Right cardiac atrium (tissue), 5 donors: ENCODE measurements at regions of chr2 and their contacts with region 1.

Region 1: GRCh38 chr2:237691908-237692600 is 64.7 kb downstream of the LRRFIP1 start:
- DNase-seq: peak; percentile 98 to 99 (median 99)
- ATAC-seq: peak; percentile 80 to 85
- H3K4me3 ChIP-seq: peak overlapping the region; percentile 82
- H3K27ac ChIP-seq: peak overlapping the region; percentile 90
- H3K4me1 ChIP-seq: peaks cover 15% of the 10 kb centered on the region
- H3K27me3 ChIP-seq: no peaks in the 10 kb centered on the region

Region 2: DNA sequence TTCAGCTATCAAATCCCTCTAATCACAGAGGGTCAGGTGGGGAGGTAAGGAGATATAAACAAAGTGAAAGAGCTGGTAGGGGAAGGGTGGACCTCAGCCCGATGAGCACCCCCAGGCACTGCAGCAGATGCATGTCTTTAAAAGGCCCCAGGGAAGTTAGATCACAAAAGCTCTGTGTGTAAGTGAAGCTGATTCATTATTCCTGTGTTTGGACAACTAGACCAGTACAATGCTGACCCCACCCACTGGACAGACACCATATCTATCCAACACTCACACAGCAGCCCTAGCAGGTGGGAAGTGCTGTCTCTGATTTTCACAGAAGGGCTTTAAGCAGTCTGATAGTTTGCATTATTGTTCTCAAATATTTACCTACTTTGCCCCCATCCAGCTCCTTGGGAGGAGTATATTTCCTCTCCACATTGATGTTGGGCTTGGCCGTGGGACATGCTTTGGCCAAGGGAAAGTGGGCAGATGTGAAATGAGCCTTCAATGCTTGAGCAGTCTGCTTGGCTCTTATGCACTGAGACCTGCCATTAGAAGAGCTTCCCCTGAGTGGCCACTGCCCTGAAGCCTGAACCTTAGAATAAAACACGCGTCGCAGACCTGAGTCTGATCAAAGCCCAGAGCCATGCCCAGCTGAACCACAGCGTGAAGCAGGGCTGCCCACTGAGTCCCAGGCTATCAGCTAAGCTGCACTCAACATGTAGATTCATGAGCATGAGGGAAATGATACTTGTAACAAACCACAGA is 495.0 kb before region 1 on chr2:
- intact Hi-C with region 1: no loop called
- DNase-seq: no peak
- ATAC-seq: peak in 1 of 2 donors; percentile 77
- H3K4me3 ChIP-seq: no peak overlapping the region
- H3K27ac ChIP-seq: no peak overlapping the region
- H3K4me1 ChIP-seq: peaks cover 2% of the 10 kb centered on the region
- H3K27me3 ChIP-seq: no peaks in the 10 kb centered on the region

Region 3: GRCh38 chr2:237529452-237530402 is 162.3 kb before region 1 on chr2:
- intact Hi-C with region 1: no loop called
- DNase-seq: no peak
- ATAC-seq: peak in 1 of 2 donors; percentile 25
- H3K4me3 ChIP-seq: no peak overlapping the region
- H3K27ac ChIP-seq: no peak overlapping the region
- H3K4me1 ChIP-seq: no peaks in the 10 kb centered on the region
- H3K27me3 ChIP-seq: no peaks in the 10 kb centered on the region

Region 4: DNA sequence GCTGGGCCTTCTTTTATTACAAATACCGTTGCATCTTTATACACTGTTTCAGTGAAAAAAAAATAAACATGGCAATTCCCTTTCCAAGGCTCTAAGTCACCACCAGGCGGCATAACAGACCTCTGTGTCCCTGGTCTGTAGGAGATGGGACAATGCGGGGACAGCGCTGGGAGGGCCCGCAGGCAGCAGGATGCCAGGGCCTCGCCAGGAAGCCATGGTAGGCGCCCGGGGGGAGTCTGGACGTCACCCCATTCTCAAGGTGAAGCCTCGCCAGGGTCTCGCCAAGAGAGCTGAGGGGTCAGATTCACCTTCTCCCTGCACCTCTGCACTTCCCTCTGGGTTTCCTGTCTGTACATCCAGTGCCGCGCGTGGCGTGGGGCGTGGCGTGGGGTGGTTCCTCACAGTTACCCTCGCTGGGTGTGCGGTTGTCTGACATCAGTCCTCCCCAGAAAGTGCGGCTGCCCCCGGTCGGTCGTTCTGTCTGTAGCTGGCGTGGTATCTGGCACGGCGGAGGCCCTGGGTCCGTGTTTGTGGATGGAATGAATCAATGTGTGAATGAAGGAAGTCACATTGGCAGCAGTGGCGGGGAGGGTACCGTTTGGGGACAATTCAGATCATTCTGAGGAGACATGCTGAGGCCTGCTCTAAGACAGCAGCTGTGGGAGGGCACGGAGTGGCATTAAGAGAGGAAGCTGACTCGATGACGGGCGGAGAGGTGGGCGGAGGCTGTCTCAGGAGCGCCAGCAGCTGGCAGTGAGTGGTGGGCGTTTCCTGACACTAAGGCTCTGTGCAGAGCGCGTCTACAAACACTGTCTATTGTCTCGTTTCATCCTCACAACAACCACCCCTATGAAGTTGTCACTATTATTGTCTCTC is 18.7 kb before region 1 on chr2:
- intact Hi-C with region 1: no loop called
- DNase-seq: peak; percentile 70 to 86 (median 86)
- ATAC-seq: peak; percentile 56
- H3K4me3 ChIP-seq: no peak overlapping the region
- H3K27ac ChIP-seq: no peak overlapping the region
- H3K4me1 ChIP-seq: peaks cover 22% of the 10 kb centered on the region
- H3K27me3 ChIP-seq: no peaks in the 10 kb centered on the region

Region 5: DNA sequence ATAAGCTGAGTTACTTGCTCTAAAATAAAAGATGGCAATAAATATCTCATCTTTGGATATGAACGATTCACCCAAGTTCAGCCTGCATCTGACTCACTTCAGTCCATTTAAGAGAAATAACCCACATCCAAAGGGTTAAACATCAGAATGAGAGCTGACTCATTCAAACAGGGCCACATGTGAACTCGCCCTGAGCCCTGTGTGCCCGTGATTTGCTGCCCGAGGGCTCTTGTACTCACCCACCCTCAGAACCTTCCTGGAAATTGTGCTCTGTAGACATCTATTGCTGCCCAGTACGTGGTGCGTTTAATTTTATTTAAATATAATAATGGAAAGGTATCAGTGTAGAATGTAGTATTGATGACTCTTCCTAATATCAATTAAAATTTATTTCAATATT is 39.6 kb after region 1 on chr2:
- intact Hi-C with region 1: loop called in 2 of 4 experiments (anchors 5 kb)
- DNase-seq: no peak
- ATAC-seq: peak in 1 of 2 donors; percentile 43
- H3K4me3 ChIP-seq: no peak overlapping the region
- H3K27ac ChIP-seq: no peak overlapping the region
- H3K4me1 ChIP-seq: peaks cover 20% of the 10 kb centered on the region
- H3K27me3 ChIP-seq: no peaks in the 10 kb centered on the region

Region 6: DNA sequence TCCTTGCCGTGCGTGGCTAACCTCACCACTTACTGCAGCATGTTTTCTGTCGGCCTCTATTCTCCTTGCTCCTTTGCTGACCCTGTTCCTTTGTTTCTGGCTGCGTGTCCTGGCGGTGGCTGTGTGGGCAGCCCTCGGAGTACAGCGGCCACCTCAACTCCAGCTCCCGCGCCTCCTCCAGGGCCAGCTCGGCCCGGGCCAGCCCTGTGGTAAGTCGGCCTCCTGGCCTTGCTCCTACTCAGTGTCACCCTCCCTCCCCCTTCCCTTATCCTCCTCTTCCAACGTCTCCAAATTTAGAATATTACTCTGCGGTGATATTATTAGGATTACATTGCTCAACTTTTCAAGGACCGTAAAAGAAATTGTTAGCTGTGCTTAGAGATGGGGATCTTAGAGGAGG is 47.0 kb after region 1 on chr2:
- intact Hi-C with region 1: loop called in 2 of 4 experiments (anchors 5 kb)
- DNase-seq: peak; percentile 70 to 90 (median 85)
- ATAC-seq: peak; percentile 91 to 92
- H3K4me3 ChIP-seq: no peak overlapping the region
- H3K27ac ChIP-seq: peak overlapping the region; percentile 84
- H3K4me1 ChIP-seq: peaks cover 13% of the 10 kb centered on the region
- H3K27me3 ChIP-seq: no peaks in the 10 kb centered on the region